ENCODE measurements at regions of chr20 and their contacts with region 1.

Region 1: GRCh38 chr20:53773792-53774401 is 180.3 kb upstream of the ZNF217 start:
- DNase-seq: peak; percentile 97
- ATAC-seq: peak; percentile 83
- H3K4me3 ChIP-seq: no peak overlapping the region
- H3K27ac ChIP-seq: peak overlapping the region; percentile 72; the same call in 1 of the 2 replicates
- H3K4me1 ChIP-seq: peaks cover 17% of the 10 kb centered on the region
- H3K27me3 ChIP-seq: no peaks in the 10 kb centered on the region
- CTCF ChIP-seq: no peak
- POLR2A ChIP-seq: no peak
- RAD21 ChIP-seq: peak; percentile 34; the same call in 1 of the 2 replicates

Region 2: GRCh38 chr20:53668992-53669391 is 104.9 kb before region 1 on chr20:
- CTCF ChIA-PET with region 1: no interaction called
- POLR2A ChIA-PET with region 1: interaction called, 24 read pairs
- dilution Hi-C with region 1: no loop called
- in situ Hi-C with region 1: no loop called
- intact Hi-C with region 1: no loop called
- DNase-seq: no peak
- ATAC-seq: no peak
- H3K4me3 ChIP-seq: no peak overlapping the region
- H3K27ac ChIP-seq: no peak overlapping the region
- H3K4me1 ChIP-seq: no peaks in the 10 kb centered on the region
- H3K27me3 ChIP-seq: no peaks in the 10 kb centered on the region
- CTCF ChIP-seq: no peak
- POLR2A ChIP-seq: no peak
- RAD21 ChIP-seq: no peak

Region 3: GRCh38 chr20:53869466-53870258 is 95.8 kb after region 1 on chr20:
- CTCF ChIA-PET with region 1: interaction called, 7 read pairs
- POLR2A ChIA-PET with region 1: no interaction called
- dilution Hi-C with region 1: no loop called
- in situ Hi-C with region 1: no loop called
- intact Hi-C with region 1: loop called (anchors 2 kb)
- DNase-seq: peak; percentile 74
- ATAC-seq: peak; percentile 17; the same call in 1 of the 2 replicates
- H3K4me3 ChIP-seq: no peak overlapping the region
- H3K27ac ChIP-seq: peak overlapping the region; percentile 50; the same call in 1 of the 2 replicates
- H3K4me1 ChIP-seq: peaks cover 29% of the 10 kb centered on the region
- H3K27me3 ChIP-seq: no peaks in the 10 kb centered on the region
- CTCF ChIP-seq: peak; percentile 68
- POLR2A ChIP-seq: no peak
- RAD21 ChIP-seq: peak; percentile 74

Region 4: GRCh38 chr20:53880072-53880641 is 106.3 kb after region 1 on chr20:
- CTCF ChIA-PET with region 1: no interaction called
- POLR2A ChIA-PET with region 1: no interaction called
- dilution Hi-C with region 1: no loop called
- in situ Hi-C with region 1: no loop called
- intact Hi-C with region 1: no loop called
- DNase-seq: no peak
- ATAC-seq: no peak
- H3K4me3 ChIP-seq: no peak overlapping the region
- H3K27ac ChIP-seq: no peak overlapping the region
- H3K4me1 ChIP-seq: peaks cover 2% of the 10 kb centered on the region; the same call in 1 of the 2 replicates
- H3K27me3 ChIP-seq: no peaks in the 10 kb centered on the region
- CTCF ChIP-seq: no peak
- POLR2A ChIP-seq: no peak
- RAD21 ChIP-seq: no peak

Measured in IMR-90 (cell line).